ENCODE measurements at regions of chr5 and their contacts with region 1.

Region 1: GRCh38 chr5:128213340-128213739 is 129.8 kb downstream of the SLC12A2 start:
- DNase-seq: peak; percentile 83
- H3K4me3 Mint-ChIP-seq: no peak overlapping the region
- H3K27ac Mint-ChIP-seq: no peak overlapping the region
- H3K4me1 Mint-ChIP-seq: no peaks in the 10 kb centered on the region
- H3K27me3 Mint-ChIP-seq: peaks cover 2% of the 10 kb centered on the region

Region 2: DNA sequence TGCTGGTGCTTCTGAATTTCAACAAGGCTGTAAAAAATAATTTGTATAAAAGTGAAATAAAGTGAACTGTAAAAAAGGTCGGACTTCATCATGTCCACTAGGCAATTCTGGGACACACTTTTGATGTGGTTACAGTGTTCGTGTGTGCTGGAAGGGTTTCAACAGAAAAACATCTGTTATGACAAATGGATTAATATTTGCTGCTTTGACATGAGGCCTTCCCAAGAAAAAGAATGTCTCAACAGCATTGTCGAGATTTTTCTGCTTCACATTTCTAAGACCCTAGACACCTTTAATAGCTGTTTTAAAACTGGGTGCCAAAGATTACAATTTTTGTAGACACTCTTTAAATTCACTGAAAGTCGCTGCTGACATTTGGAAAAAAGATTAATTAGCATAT is 86.8 kb after region 1 on chr5:
- intact Hi-C with region 1: no loop called
- DNase-seq: no peak
- H3K4me3 Mint-ChIP-seq: no peak overlapping the region
- H3K27ac Mint-ChIP-seq: no peak overlapping the region
- H3K4me1 Mint-ChIP-seq: no peaks in the 10 kb centered on the region
- H3K27me3 Mint-ChIP-seq: no peaks in the 10 kb centered on the region

Region 3: DNA sequence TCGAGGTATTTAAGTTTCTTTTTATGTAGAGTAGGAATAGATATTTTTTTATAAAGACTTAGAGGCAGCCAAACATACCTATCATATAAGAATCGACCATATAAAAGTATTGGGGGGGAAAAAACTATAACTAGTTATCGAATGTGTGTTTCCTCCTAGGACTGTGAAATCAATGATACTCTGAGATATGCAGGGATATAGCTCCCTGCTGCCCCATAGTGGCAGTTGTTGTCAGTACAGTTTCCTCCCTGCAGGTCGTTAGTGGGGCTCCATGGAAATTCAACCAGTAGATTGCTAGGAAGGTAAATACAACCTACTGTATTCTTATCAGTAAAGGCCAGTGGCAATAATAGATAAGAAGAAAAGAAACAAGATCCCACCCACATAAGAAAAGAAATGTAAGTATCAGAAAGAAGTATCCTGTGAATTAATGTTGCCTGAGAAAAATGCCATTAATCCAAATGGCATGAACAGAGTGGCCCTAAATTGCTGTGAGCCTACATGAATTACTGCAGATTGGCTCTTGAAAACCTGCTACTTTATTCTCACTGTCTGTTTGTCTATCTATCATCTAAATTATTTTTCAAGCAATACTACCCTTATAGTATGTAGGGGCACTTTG is 461.6 kb after region 1 on chr5:
- intact Hi-C with region 1: loop called (anchors 1 kb)
- DNase-seq: peak; percentile 77
- H3K4me3 Mint-ChIP-seq: no peak overlapping the region
- H3K27ac Mint-ChIP-seq: no peak overlapping the region
- H3K4me1 Mint-ChIP-seq: no peaks in the 10 kb centered on the region
- H3K27me3 Mint-ChIP-seq: no peaks in the 10 kb centered on the region

Region 4: DNA sequence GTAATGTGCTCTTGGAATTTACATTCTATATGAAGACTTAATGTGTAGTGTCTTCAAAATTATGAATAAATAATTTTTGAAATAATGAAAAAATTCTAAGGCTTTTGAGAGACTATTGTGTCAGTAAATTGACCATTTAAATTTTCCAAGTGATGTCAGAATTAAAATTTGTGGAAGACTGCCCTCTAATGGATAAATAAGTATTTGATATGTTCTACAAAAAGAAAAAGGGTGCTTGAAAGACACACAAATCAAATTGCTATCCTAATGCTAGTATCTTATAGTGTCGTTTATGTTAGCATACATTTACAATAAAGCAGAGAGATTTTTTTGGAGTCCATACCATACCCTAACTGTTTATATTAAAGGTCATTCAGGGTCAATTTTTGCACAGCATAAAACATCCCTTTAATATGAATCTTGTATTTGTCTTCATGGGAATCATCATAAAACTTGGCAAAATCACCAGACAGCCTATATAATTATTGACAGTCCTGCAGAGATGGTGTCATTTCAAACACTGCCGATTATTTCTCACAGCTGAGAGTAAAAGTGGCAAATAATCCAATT is 631.1 kb after region 1 on chr5:
- intact Hi-C with region 1: loop called (anchors 5 kb)
- DNase-seq: no peak
- H3K4me3 Mint-ChIP-seq: no peak overlapping the region
- H3K27ac Mint-ChIP-seq: no peak overlapping the region
- H3K4me1 Mint-ChIP-seq: no peaks in the 10 kb centered on the region
- H3K27me3 Mint-ChIP-seq: no peaks in the 10 kb centered on the region

Region 5: GRCh38 chr5:129767906-129768380 is 1554.6 kb after region 1 on chr5:
- intact Hi-C with region 1: loop called (anchors 5 kb)
- DNase-seq: peak; percentile 88
- H3K4me3 Mint-ChIP-seq: no peak overlapping the region
- H3K27ac Mint-ChIP-seq: no peak overlapping the region
- H3K4me1 Mint-ChIP-seq: peaks cover 2% of the 10 kb centered on the region
- H3K27me3 Mint-ChIP-seq: peaks cover 2% of the 10 kb centered on the region

Region 6: DNA sequence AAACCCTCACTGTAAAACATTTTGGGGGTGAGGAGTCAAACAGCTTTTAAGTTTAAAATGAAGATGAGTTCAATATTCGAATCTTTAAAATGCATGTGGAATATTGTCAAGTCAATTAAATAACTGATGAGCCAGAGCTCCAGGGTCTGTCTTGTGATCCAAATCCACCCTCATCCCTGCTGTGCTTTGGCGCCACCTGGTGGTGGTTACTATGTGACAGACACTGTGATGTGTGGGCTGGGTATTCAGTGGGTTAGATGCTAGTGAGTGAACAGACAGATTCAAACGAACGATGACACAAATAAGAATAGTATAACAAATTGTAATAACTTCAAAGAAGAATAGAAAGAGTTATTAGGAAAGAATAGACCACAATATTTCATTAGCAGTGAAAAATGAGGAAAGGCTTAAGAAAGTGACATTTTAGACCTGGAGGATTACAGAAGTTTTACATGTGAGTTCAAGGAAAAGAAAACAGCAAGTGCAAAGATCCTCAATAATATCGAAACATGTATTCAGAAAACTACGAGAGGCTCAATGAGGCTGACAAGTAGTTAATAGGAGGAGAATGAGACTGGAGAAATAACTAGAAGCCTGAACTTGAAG is 1639.5 kb after region 1 on chr5:
- intact Hi-C with region 1: loop called (anchors 10 kb)
- DNase-seq: peak; percentile 89
- H3K4me3 Mint-ChIP-seq: no peak overlapping the region
- H3K27ac Mint-ChIP-seq: no peak overlapping the region
- H3K4me1 Mint-ChIP-seq: no peaks in the 10 kb centered on the region
- H3K27me3 Mint-ChIP-seq: no peaks in the 10 kb centered on the region

Measured in activated CD4-positive, alpha-beta T cell treated with anti-CD3 and anti-CD28 coated beads, Interleukin-2, amount 10 ng/mL, durations not matched to agents 24 days and 14 days (primary cell).